ENCODE measurements at regions of chr16 and their contacts with region 1.

Region 1: DNA sequence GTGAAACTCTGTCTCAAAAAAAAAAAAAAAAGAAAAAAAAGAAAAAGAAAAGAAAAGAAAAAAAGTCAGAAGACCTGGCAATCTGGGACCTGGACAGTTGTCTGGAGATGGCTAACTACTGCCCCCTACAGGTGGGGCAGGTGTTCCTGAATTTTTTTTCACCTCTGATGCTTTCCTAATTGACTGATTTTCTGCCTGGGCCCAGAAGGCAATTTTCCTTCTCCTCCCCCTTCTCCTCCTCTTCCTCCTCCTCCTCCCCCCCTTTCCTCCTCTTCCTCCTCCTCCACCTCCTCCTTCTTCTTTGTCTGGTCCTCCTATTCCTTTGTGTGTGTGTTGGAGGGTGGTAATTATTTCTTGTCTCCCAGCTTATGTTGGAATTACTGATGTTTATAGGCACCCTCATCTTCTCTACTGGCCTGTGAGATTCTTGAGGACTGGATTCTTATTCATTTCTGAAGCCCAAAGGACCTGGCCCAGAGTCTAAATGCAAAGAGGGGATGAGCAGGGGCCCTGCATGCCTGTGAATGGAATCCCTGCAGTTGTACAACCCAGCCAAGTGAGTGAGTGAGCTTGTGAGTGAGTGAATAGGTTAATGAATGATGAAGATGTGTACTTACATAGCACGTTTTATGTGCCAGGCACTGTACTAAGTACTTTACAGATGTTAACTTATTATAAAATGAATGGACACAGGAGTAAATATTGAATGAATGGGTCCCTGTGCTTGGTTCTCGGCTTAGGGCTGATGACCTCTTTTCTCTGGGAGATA is 26.9 kb downstream of the IRX5 start:
- DNase-seq: peak; percentile 61
- ATAC-seq: no peak
- H3K4me3 Mint-ChIP-seq: no peak overlapping the region
- H3K27ac Mint-ChIP-seq: no peak overlapping the region
- H3K4me1 Mint-ChIP-seq: peaks cover 2% of the 10 kb centered on the region
- H3K27me3 Mint-ChIP-seq: peaks cover 4% of the 10 kb centered on the region
- CTCF ChIP-seq: peak; percentile 61

Region 2: GRCh38 chr16:54891346-54891745 is 66.2 kb before region 1 on chr16:
- CTCF ChIA-PET with region 1: no interaction called
- POLR2A ChIA-PET with region 1: no interaction called
- DNase-seq: no peak
- ATAC-seq: no peak
- H3K4me3 Mint-ChIP-seq: no peak overlapping the region
- H3K27ac Mint-ChIP-seq: no peak overlapping the region
- H3K4me1 Mint-ChIP-seq: no peaks in the 10 kb centered on the region
- H3K27me3 Mint-ChIP-seq: no peaks in the 10 kb centered on the region
- CTCF ChIP-seq: no peak

Region 3: GRCh38 chr16:54968784-54969183 is 11.2 kb after region 1 on chr16:
- CTCF ChIA-PET with region 1: interaction called, 10 read pairs
- POLR2A ChIA-PET with region 1: interaction called, 4 read pairs
- DNase-seq: no peak
- ATAC-seq: no peak
- H3K4me3 Mint-ChIP-seq: no peak overlapping the region
- H3K27ac Mint-ChIP-seq: no peak overlapping the region
- H3K4me1 Mint-ChIP-seq: no peaks in the 10 kb centered on the region
- H3K27me3 Mint-ChIP-seq: no peaks in the 10 kb centered on the region
- CTCF ChIP-seq: no peak

Measured in WTC11 (cell line).